H1 (cell line): ENCODE measurements at regions of chr14 and their contacts with region 1.

Region 1: GRCh38 chr14:42123526-42123925 is 516.9 kb downstream of the LRFN5 start:
- DNase-seq: no peak
- H3K4me3 ChIP-seq: no peak overlapping the region
- H3K27ac ChIP-seq: no peak overlapping the region
- H3K4me1 ChIP-seq: no peaks in the 10 kb centered on the region
- H3K27me3 ChIP-seq: no peaks in the 10 kb centered on the region
- CTCF ChIP-seq: no peak
- EP300 ChIP-seq: no peak
- POLR2A ChIP-seq: no peak
- RAD21 ChIP-seq: no peak

Region 2: DNA sequence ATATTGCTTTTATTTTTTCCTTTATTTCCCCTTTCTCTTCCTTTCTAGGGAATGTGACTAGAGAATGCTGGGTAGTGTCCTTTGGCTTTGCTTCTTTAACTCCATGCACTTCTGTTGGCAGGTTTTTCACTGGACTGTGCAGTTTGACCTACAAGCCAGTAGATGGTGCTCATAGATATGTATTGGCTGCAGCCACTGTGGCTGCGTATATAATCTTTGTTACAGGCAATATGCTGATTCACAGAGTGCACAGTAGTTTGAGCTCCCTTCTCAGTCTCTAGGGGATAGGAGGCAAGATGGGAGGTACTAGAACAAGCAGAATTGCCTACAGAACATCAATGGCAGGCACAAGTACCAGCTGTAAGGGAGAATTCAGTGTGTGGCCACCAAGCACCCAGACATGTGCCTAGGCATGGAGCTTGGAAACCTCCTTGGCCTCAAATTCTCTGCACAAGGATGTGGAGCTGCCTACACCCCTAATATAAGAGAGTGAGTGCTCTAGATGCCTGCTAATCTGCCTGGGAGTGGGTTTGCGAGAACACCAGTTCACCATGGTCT is 13.3 kb before region 1 on chr14:
- CTCF ChIA-PET with region 1: interaction called, 11 read pairs
- POLR2A ChIA-PET with region 1: no interaction called
- DNase-seq: no peak
- H3K4me3 ChIP-seq: no peak overlapping the region
- H3K27ac ChIP-seq: no peak overlapping the region
- H3K4me1 ChIP-seq: no peaks in the 10 kb centered on the region
- H3K27me3 ChIP-seq: no peaks in the 10 kb centered on the region
- CTCF ChIP-seq: peak in 2 of 3 experiments; percentile 61 to 75; a peak in 3 of 4 replicates
- EP300 ChIP-seq: no peak
- POLR2A ChIP-seq: no peak
- RAD21 ChIP-seq: peak; percentile 90 to 92

Region 3: GRCh38 chr14:42185718-42186117 is 62.2 kb after region 1 on chr14:
- CTCF ChIA-PET with region 1: no interaction called
- POLR2A ChIA-PET with region 1: no interaction called
- DNase-seq: no peak
- H3K4me3 ChIP-seq: no peak overlapping the region
- H3K27ac ChIP-seq: no peak overlapping the region
- H3K4me1 ChIP-seq: no peaks in the 10 kb centered on the region
- H3K27me3 ChIP-seq: no peaks in the 10 kb centered on the region
- CTCF ChIP-seq: no peak
- EP300 ChIP-seq: no peak
- POLR2A ChIP-seq: no peak
- RAD21 ChIP-seq: no peak

Region 4: GRCh38 chr14:42241101-42241500 is 117.6 kb after region 1 on chr14:
- CTCF ChIA-PET with region 1: no interaction called
- POLR2A ChIA-PET with region 1: no interaction called
- DNase-seq: no peak
- H3K4me3 ChIP-seq: no peak overlapping the region
- H3K27ac ChIP-seq: no peak overlapping the region
- H3K4me1 ChIP-seq: no peaks in the 10 kb centered on the region
- H3K27me3 ChIP-seq: no peaks in the 10 kb centered on the region
- CTCF ChIP-seq: no peak
- EP300 ChIP-seq: no peak
- POLR2A ChIP-seq: no peak
- RAD21 ChIP-seq: no peak

Region 5: DNA sequence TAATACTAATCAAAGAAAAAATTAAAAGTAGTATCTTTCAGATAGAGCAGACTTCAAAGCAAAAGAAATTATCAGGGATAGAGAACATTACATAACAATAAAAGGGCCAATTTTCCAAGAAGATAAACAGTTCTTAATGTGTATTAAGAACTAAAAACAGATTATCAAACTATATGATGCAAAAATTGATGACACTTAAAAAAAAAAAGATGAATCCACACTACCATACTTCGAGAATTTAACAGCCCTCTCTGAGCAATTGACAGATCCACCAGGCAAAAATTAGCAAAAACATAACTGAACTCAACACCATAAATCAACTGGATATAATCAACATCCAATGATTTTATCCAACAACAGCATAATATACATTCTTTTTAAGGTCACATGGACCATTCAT is 169.7 kb after region 1 on chr14:
- CTCF ChIA-PET with region 1: no interaction called
- POLR2A ChIA-PET with region 1: no interaction called
- DNase-seq: no peak
- H3K4me3 ChIP-seq: no peak overlapping the region
- H3K27ac ChIP-seq: no peak overlapping the region
- H3K4me1 ChIP-seq: no peaks in the 10 kb centered on the region
- H3K27me3 ChIP-seq: no peaks in the 10 kb centered on the region
- CTCF ChIP-seq: no peak
- EP300 ChIP-seq: no peak
- POLR2A ChIP-seq: no peak
- RAD21 ChIP-seq: no peak